ENCODE measurements at regions of chr6 and their contacts with region 1.

Region 1: DNA sequence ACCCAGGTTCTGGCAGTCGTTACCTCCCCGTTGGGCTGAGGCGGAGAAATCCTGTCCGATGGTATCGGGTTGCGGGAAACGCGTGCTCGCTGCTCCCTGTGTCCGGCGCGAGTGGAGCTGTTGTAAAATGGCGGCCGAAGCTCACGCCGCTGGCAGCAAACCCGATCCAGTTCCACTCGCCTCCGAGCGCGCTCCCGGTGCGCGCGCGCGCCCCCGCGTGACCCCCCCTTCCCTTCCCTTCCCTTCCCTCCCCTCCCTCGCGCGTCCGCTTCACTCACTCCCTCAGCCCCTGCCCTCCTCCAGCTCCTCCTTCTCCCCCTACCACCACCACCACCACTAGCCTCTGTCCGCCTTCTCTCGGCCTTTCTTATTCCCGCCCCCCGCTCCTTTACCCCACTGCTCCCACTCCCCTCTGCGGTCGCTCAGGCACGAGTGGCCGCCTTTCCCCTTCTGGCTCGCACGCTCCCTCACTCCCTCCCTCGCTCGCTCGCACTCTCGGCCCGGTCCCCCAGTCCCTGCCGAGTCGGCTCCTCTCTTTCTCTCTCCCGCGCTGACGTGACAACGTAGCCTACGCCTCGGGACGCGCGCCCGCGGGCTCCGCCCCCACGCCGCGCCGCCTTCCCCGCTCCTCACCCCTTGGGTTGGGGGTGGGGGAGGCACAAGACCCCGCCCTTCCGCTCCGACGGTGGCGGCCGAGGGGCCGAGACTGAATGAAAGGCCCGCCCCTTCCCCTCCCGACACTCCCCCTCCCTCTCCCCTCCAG is at the start of gene SYNCRIP:
- DNase-seq: peak; percentile 81 to 98
- H3K4me3 ChIP-seq: peak within 1 kb of the TSS; percentile 91
- H3K27ac ChIP-seq: peak within 1 kb of the TSS; percentile 99
- H3K4me1 ChIP-seq: peaks cover 30% of the 10 kb centered on the region
- H3K27me3 ChIP-seq: no peaks in the 10 kb centered on the region
- CTCF ChIP-seq: no peak
- total RNA-seq, gene SYNCRIP: 73.7 and 103 TPM in 2 replicates

Region 2: GRCh38 chr6:85593438-85594196 is 49.3 kb before region 1 on chr6 and contains the start of gene SNX14:
- CTCF ChIA-PET with region 1: no interaction called
- POLR2A ChIA-PET with region 1: interaction called, 7 read pairs
- intact Hi-C with region 1: loop called (anchors 1 kb)
- DNase-seq: peak; percentile 85 to 92
- H3K4me3 ChIP-seq: peak within 1 kb of the TSS; percentile 84
- H3K27ac ChIP-seq: peak within 1 kb of the TSS; percentile 76
- H3K4me1 ChIP-seq: peaks cover 34% of the 10 kb centered on the region
- H3K27me3 ChIP-seq: no peaks in the 10 kb centered on the region
- CTCF ChIP-seq: no peak
- total RNA-seq, gene SNX14: 92.0 and 99.1 TPM in 2 replicates

Region 3: GRCh38 chr6:85614617-85615179 is 28.3 kb before region 1 on chr6:
- CTCF ChIA-PET with region 1: no interaction called
- POLR2A ChIA-PET with region 1: no interaction called
- intact Hi-C with region 1: no loop called
- DNase-seq: no peak
- H3K4me3 ChIP-seq: no peak overlapping the region
- H3K27ac ChIP-seq: no peak overlapping the region
- H3K4me1 ChIP-seq: no peaks in the 10 kb centered on the region
- H3K27me3 ChIP-seq: no peaks in the 10 kb centered on the region
- CTCF ChIP-seq: no peak

Region 4: DNA sequence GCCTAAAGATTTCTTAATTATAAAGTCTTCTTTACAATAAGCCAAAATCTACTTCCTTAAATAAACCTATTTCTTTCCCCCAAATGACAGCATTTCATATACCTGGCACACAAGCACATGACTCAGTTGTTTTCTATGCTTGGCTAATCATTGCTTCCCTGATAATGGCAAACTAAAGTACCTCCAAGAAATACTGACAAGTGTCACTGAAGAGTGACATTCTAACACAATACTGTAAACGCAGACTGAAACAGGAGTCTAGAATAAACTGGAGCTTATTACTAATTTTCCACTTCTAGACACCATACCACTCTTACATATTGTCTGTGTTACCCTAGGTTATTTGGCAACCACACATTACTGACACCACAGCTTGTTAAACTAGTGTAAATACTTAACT is 14.6 kb before region 1 on chr6:
- CTCF ChIA-PET with region 1: interaction called, 21 read pairs
- POLR2A ChIA-PET with region 1: interaction called, 6 read pairs
- intact Hi-C with region 1: no loop called
- DNase-seq: no peak
- H3K4me3 ChIP-seq: no peak overlapping the region
- H3K27ac ChIP-seq: no peak overlapping the region
- H3K4me1 ChIP-seq: no peaks in the 10 kb centered on the region
- H3K27me3 ChIP-seq: no peaks in the 10 kb centered on the region
- CTCF ChIP-seq: no peak

Region 5: DNA sequence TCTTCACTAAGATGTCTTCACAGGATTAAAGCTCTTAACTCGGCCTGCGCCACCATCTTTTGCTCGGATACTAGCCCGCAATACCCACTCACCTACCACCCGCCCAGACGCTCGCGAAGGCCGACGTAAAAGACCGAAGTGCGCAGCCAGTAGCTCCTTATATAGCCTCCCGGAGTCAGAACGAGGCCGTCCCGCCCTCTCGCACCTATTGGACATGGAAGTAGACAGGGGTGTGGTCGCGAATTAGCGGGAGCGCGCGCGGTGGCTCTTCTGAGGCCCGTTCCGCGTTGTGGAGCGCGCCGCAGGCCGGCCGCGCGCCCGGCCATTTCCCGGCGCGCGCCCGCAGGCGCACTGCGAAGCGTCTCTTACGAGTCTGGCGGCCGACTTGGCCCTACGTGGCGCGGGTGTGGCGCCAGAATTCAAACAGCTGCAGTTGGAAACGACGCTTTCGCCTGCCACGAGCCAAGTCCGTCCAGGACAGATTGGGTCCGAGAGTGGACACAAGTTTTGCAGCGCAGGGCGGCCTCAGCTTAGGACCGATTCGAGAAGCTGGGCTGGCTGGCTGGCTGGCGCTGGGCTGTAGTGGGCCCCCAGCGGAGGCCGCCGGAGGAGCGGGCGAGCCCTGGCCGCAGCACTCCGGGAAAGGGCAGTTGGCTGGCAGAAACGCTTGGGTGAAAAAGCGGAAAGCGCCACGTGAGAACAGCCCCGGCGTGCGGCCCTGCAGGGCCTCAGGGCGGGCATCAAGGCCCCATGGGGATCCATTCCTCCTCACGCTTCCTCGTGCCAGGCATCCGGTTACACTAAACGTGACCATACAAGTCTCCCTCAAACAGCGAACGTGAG is 35.9 kb after region 1 on chr6:
- CTCF ChIA-PET with region 1: interaction called, 20 read pairs
- POLR2A ChIA-PET with region 1: interaction called, 49 read pairs
- intact Hi-C with region 1: loop called (anchors 1 kb)
- DNase-seq: peak; percentile 86 to 96
- H3K4me3 ChIP-seq: peak overlapping the region; percentile 95
- H3K27ac ChIP-seq: peak overlapping the region; percentile 77
- H3K4me1 ChIP-seq: peaks cover 17% of the 10 kb centered on the region
- H3K27me3 ChIP-seq: no peaks in the 10 kb centered on the region
- CTCF ChIP-seq: no peak

Region 6: GRCh38 chr6:85744433-85744970 is 101.5 kb after region 1 on chr6:
- CTCF ChIA-PET with region 1: no interaction called
- POLR2A ChIA-PET with region 1: no interaction called
- intact Hi-C with region 1: no loop called
- DNase-seq: no peak
- H3K4me3 ChIP-seq: no peak overlapping the region
- H3K27ac ChIP-seq: no peak overlapping the region
- H3K4me1 ChIP-seq: peaks cover 10% of the 10 kb centered on the region
- H3K27me3 ChIP-seq: no peaks in the 10 kb centered on the region
- CTCF ChIP-seq: no peak

Region 7: GRCh38 chr6:87176206-87176897 is 1533.4 kb after region 1 on chr6:
- CTCF ChIA-PET with region 1: no interaction called
- POLR2A ChIA-PET with region 1: interaction called, 19 read pairs
- intact Hi-C with region 1: no loop called
- DNase-seq: no peak
- H3K4me3 ChIP-seq: no peak overlapping the region
- H3K27ac ChIP-seq: no peak overlapping the region
- H3K4me1 ChIP-seq: no peaks in the 10 kb centered on the region
- H3K27me3 ChIP-seq: no peaks in the 10 kb centered on the region
- CTCF ChIP-seq: no peak